Caco-2 (cell line): ENCODE measurements at regions of chr12 and their contacts with region 1.

Region 1: GRCh38 chr12:65169320-65170208 is at the start of gene LEMD3:
- DNase-seq: peak; percentile 93 to 94
- H3K4me3 ChIP-seq: peak within 1 kb of the TSS; percentile 58
- H3K4me3 Mint-ChIP-seq: peak within 1 kb of the TSS; percentile 92
- H3K27ac Mint-ChIP-seq: peak within 1 kb of the TSS; percentile 97
- H3K4me1 ChIP-seq: peaks cover 31% of the 10 kb centered on the region
- H3K4me1 Mint-ChIP-seq: peaks cover 11% of the 10 kb centered on the region
- H3K27me3 ChIP-seq: no peaks in the 10 kb centered on the region
- H3K27me3 Mint-ChIP-seq: no peaks in the 10 kb centered on the region
- CTCF ChIP-seq: no peak
- total RNA-seq, gene LEMD3: 35.2 and 35.8 TPM in 2 replicates

Region 2: GRCh38 chr12:65133876-65134275 is 35.7 kb before region 1 on chr12:
- CTCF ChIA-PET with region 1: no interaction called
- POLR2A ChIA-PET with region 1: no interaction called
- intact Hi-C with region 1: no loop called
- DNase-seq: no peak
- H3K4me3 ChIP-seq: no peak overlapping the region
- H3K4me3 Mint-ChIP-seq: no peak overlapping the region
- H3K27ac Mint-ChIP-seq: no peak overlapping the region
- H3K4me1 ChIP-seq: no peaks in the 10 kb centered on the region
- H3K4me1 Mint-ChIP-seq: no peaks in the 10 kb centered on the region
- H3K27me3 ChIP-seq: no peaks in the 10 kb centered on the region
- H3K27me3 Mint-ChIP-seq: peaks cover 13% of the 10 kb centered on the region
- CTCF ChIP-seq: no peak

Region 3: DNA sequence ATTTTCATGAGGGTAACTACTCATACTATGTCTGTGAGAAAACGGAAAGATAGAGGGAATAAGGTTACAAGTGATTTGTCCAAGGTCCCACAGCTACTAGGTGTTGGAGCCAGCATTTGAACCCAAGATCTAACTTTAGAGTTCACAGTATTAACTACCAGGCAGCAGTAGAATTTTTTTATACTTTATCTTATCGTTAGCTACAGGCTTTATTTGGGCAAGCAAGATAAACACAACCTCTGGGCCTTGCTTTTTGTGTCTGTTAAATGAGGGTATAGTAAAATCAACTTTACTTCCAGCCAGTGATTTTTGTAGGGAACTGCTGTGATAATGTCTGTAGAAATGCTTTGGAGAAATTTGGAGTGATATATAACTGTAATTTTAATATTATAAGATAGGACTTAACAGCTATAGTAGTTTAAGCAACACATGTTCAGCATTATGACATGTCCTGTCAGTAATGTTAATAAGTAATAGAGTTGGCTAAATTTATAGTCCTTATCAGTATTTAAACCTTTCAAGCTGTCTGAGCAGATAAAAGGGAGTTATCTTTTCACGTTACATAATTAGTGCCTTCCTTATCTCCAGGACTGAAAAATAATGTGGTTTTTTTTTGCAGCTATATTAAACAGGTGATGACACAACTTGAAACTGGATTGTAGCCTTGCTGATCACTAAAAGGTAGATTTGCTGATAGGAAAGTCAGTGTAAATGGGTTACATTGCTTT is 12.6 kb after region 1 on chr12:
- CTCF ChIA-PET with region 1: interaction called, 5 read pairs
- POLR2A ChIA-PET with region 1: interaction called, 30 read pairs
- intact Hi-C with region 1: loop called (anchors 1 kb)
- DNase-seq: peak in 1 of 2 experiments; percentile 47
- H3K4me3 ChIP-seq: no peak overlapping the region
- H3K4me3 Mint-ChIP-seq: peak overlapping the region; percentile 29
- H3K27ac Mint-ChIP-seq: no peak overlapping the region
- H3K4me1 ChIP-seq: peaks cover 36% of the 10 kb centered on the region
- H3K4me1 Mint-ChIP-seq: peaks cover 26% of the 10 kb centered on the region
- H3K27me3 ChIP-seq: no peaks in the 10 kb centered on the region
- H3K27me3 Mint-ChIP-seq: no peaks in the 10 kb centered on the region
- CTCF ChIP-seq: no peak

Region 4: DNA sequence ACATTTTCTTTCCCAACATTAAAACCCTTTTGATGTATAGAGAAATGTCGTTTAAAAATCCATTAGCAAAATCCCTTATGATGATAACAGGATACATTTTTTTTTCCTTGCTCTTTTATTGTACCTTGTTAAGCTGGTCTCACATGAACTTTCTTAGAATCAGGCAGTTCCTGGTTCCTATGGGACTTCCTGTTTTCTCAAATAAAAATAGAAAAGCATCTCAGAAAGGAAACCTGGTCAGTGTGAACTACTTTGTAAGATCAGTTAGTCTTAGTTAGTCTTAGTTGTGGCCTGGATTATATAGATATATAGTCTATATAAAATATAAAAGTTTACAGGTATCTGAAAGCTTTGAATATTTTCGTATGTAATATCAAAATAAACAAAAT is 40.1 kb after region 1 on chr12:
- CTCF ChIA-PET with region 1: no interaction called
- POLR2A ChIA-PET with region 1: no interaction called
- intact Hi-C with region 1: no loop called
- DNase-seq: no peak
- H3K4me3 ChIP-seq: no peak overlapping the region
- H3K4me3 Mint-ChIP-seq: no peak overlapping the region
- H3K27ac Mint-ChIP-seq: no peak overlapping the region
- H3K4me1 ChIP-seq: no peaks in the 10 kb centered on the region
- H3K4me1 Mint-ChIP-seq: peaks cover 6% of the 10 kb centered on the region
- H3K27me3 ChIP-seq: no peaks in the 10 kb centered on the region
- H3K27me3 Mint-ChIP-seq: no peaks in the 10 kb centered on the region
- CTCF ChIP-seq: no peak

Region 5: DNA sequence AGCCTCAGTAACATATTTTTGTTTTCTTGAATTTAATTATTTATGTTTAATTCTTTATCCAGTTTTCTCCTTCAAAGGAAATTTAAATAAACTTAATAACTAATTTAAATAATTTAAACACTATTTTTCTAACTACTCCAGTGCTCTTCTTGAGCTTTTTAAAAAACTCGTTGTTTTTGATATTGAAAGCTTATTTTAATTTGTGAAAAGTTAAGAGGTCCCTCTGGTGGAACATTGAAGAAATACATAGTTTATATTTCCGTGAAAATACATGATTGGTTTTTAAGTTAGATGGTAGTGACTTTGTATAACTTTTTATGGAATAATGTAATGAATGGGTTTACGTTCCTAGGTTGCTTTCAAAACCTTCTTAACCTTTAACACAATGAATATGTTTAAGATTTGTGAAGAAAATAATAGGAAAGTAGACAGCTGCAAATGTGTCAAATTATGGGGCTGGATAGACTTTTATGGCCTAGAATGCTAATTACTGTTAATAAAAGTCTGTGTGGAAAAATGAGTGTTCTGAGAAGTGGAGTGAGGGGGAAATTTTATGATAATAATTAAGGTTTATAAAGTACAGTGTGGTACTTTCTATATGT is 63.0 kb after region 1 on chr12:
- CTCF ChIA-PET with region 1: interaction called, 18 read pairs
- POLR2A ChIA-PET with region 1: interaction called, 8 read pairs
- intact Hi-C with region 1: loop called (anchors 1 kb)
- DNase-seq: no peak
- H3K4me3 ChIP-seq: no peak overlapping the region
- H3K4me3 Mint-ChIP-seq: no peak overlapping the region
- H3K27ac Mint-ChIP-seq: no peak overlapping the region
- H3K4me1 ChIP-seq: no peaks in the 10 kb centered on the region
- H3K4me1 Mint-ChIP-seq: no peaks in the 10 kb centered on the region
- H3K27me3 ChIP-seq: no peaks in the 10 kb centered on the region
- H3K27me3 Mint-ChIP-seq: no peaks in the 10 kb centered on the region
- CTCF ChIP-seq: peak; percentile 17 to 22